A549 (cell line): ENCODE measurements at regions of chr17 and their contacts with region 1.

Region 1: DNA sequence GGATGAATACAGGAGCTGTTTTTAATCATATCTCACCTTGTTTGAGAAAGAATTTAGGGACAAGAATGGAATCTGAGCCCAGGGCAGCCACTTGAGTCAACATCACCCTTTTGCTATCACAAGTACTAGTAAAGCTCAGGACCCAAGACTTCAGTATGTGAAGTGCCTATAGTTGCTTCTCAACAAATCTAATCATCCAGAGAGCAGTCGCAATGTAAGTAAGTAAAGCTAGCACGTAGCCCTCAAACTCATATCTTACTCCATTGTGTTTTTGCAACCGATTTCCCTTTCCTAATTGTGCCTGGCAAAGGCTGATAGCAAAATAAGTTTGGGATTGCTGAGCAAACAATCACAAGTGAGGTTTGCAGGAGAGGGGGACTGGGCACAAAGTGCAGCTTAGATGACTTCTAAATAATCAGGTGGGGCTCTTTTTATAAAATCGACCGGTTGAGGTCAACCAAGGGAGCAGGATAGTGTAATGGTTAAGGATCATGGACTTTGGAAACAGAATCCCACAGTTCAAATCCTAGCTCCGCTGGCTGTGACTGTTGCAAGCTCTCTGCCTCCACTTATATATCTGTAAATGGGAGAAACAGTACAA is 13.0 kb downstream of the TOB1 start:
- DNase-seq: no peak
- ATAC-seq: no peak
- H3K4me3 ChIP-seq: no peak overlapping the region
- H3K27ac ChIP-seq: peak overlapping the region in 1 of 2 experiments; percentile 80; a peak in 2 of 6 replicates
- H3K4me1 ChIP-seq: peaks cover 25% of the 10 kb centered on the region
- CTCF ChIP-seq: no peak
- EP300 ChIP-seq: no peak
- POLR2A ChIP-seq: no peak
- RAD21 ChIP-seq: no peak

Region 2: DNA sequence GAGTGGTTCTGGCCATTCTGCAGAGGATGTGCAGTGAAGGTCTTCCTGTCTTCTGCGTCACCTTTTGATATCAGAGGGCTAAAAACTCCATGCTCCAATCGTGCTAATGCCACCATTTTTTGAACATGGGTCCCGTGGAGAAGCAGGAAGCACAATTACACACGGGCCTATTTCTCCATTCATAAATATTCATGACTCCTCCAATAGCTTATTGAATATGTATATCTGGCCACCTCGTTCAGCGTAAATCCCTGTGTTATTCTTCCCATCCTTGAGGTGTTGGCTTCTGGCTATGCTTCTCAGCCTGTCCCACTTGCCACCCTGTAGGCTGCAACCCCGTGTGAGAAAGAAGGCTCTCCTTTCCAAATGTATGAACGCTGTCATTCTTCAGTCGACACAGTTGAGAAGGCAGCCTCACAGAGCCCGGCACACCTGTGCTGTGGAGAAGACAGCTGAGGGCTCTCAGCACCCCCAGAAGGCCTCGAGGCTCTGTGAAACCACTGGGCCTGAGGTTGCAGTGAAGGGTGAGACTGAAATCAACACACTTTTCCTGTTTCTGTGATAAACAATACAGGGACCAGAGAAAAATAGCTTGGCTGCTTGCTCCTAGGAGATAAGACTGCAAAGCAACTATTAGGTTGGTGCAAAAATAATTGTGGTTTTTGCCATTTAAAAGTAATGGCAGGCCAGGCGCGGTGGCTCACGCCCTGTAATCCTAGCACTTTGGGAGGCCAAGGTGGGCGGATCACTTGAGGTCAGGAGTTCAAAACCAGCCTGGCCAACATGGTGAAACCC is 80.9 kb before region 1 on chr17:
- CTCF ChIA-PET with region 1: interaction called, 14 read pairs
- POLR2A ChIA-PET with region 1: no interaction called
- DNase-seq: no peak
- ATAC-seq: no peak
- H3K4me3 ChIP-seq: no peak overlapping the region
- H3K27ac ChIP-seq: no peak overlapping the region
- H3K4me1 ChIP-seq: peaks cover 17% of the 10 kb centered on the region
- CTCF ChIP-seq: no peak
- EP300 ChIP-seq: no peak
- POLR2A ChIP-seq: no peak
- RAD21 ChIP-seq: no peak

Region 3: GRCh38 chr17:50841949-50842354 is 11.2 kb before region 1 on chr17:
- CTCF ChIA-PET with region 1: interaction called, 197 read pairs
- POLR2A ChIA-PET with region 1: no interaction called
- DNase-seq: peak; percentile 76 to 94
- ATAC-seq: peak; percentile 85 to 94
- H3K4me3 ChIP-seq: no peak overlapping the region
- H3K27ac ChIP-seq: 0 out of 6 replicates have a peak overlapping the region, but pooled peaks of 1 of the 2 experiments have one; percentile 17
- H3K4me1 ChIP-seq: peaks cover 13% of the 10 kb centered on the region
- CTCF ChIP-seq: peak; percentile 93
- EP300 ChIP-seq: no peak
- POLR2A ChIP-seq: no peak
- RAD21 ChIP-seq: peak; percentile 93 to 94

Region 4: GRCh38 chr17:50883850-50884438 is 30.8 kb after region 1 on chr17:
- CTCF ChIA-PET with region 1: interaction called, 13 read pairs
- POLR2A ChIA-PET with region 1: no interaction called
- DNase-seq: no peak
- ATAC-seq: peak; percentile 32 to 53; a peak in 3 of 6 replicates
- H3K4me3 ChIP-seq: no peak overlapping the region
- H3K27ac ChIP-seq: peak overlapping the region; percentile 59 to 68; a peak in 5 of 6 replicates
- H3K4me1 ChIP-seq: peaks cover 27% of the 10 kb centered on the region
- CTCF ChIP-seq: no peak
- EP300 ChIP-seq: no peak
- POLR2A ChIP-seq: no peak
- RAD21 ChIP-seq: no peak

Region 5: DNA sequence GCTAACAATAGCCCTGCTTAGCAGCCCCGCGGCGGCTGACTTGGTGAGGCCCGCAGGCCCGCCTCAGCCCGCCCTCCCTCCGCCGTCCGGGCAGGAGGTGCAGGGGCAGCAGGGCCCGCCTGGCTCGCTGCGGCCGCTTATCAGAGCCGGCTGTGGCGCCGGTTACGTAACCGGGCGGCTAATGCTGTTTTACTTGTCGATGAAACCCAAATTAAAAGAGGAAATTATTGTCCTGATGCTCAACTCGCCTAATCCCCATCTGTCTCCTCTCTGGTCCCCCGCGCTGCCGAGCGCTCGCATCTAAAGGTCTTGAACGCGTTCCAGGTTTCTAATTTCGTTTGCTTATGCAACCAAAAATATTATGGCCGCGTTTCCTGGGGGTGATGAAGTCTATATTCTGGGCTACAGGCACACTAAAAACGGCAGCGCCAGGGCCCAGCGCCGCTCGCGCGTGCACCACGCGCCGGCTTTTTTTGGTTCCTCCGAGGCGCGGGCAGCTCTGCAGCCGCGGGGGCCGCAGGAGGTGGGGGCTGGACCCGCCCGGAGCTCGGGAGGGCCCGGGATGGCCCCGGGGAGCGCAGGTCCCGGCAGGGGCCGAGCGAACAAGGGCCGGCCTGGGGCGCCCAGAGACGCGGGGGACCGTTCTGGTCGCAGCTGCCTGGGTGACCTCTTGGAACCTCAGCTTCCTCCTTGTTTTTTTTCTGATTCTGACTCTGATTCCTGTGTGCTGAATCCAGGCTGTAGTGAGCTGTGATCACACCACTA is 78.2 kb after region 1 on chr17:
- CTCF ChIA-PET with region 1: interaction called, 1,502 read pairs
- POLR2A ChIA-PET with region 1: no interaction called
- DNase-seq: peak in 1 of 2 experiments; percentile 86
- ATAC-seq: peak; percentile 66 to 70
- H3K4me3 ChIP-seq: peak overlapping the region; percentile 27; the same call in 2 of the 3 replicates
- H3K27ac ChIP-seq: peak overlapping the region; percentile 94 to 98
- H3K4me1 ChIP-seq: peaks cover 63% of the 10 kb centered on the region
- CTCF ChIP-seq: no peak
- EP300 ChIP-seq: no peak; a peak in 1 of 5 replicates
- POLR2A ChIP-seq: peak; percentile 30
- RAD21 ChIP-seq: peak in 1 of 2 experiments; percentile 37; a peak in 3 of 5 replicates

Region 6: GRCh38 chr17:50976951-50977472 is 123.9 kb after region 1 on chr17:
- CTCF ChIA-PET with region 1: interaction called, 11 read pairs
- POLR2A ChIA-PET with region 1: no interaction called
- DNase-seq: no peak
- ATAC-seq: no peak
- H3K4me3 ChIP-seq: no peak overlapping the region
- H3K27ac ChIP-seq: no peak overlapping the region
- H3K4me1 ChIP-seq: no peaks in the 10 kb centered on the region
- CTCF ChIP-seq: no peak
- EP300 ChIP-seq: no peak
- POLR2A ChIP-seq: no peak
- RAD21 ChIP-seq: no peak

Region 7: DNA sequence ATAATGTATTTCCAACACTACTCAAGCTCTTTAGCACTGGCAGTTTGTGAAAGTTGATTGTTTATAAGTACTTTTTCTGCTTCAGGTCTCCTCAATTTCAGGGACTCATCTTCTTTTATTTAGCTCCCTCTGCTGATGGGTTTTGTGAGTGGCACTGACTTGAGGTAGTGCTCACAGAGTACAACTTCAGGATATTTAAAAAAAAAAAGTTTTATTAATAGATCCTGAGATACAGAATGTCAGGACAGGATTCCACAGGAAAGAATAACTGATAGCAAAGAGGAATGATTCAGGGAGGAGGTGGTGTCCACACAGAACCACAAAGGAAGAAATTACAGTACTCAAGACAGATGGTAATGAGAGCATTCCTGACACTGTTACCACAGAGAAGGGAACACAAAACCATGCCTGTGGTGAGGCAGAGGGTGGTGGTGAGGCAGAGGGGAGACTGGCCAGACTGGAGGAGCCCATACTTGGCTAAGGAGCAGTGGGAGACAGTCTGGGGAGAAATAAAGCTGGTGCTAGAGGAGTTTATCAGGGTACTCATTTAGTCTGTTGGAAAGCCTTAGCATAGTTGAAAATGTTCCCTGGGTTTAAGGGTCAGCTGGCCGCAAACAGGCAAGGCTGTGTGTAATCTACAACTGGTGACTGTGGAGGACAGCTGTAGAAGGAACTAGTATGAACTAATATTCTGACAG is 203.8 kb after region 1 on chr17:
- CTCF ChIA-PET with region 1: interaction called, 24 read pairs
- POLR2A ChIA-PET with region 1: no interaction called
- DNase-seq: peak; percentile 53 to 71
- ATAC-seq: peak; percentile 88 to 91
- H3K4me3 ChIP-seq: no peak overlapping the region
- H3K27ac ChIP-seq: peak overlapping the region in 1 of 2 experiments; percentile 36; a peak in 1 of 6 replicates
- H3K4me1 ChIP-seq: peaks cover 24% of the 10 kb centered on the region
- CTCF ChIP-seq: peak; percentile 85
- EP300 ChIP-seq: no peak
- POLR2A ChIP-seq: no peak
- RAD21 ChIP-seq: peak; percentile 69 to 70